Prostate gland (tissue), 2 donors: ENCODE measurements at regions of chr6 and their contacts with region 1.

Region 1: DNA sequence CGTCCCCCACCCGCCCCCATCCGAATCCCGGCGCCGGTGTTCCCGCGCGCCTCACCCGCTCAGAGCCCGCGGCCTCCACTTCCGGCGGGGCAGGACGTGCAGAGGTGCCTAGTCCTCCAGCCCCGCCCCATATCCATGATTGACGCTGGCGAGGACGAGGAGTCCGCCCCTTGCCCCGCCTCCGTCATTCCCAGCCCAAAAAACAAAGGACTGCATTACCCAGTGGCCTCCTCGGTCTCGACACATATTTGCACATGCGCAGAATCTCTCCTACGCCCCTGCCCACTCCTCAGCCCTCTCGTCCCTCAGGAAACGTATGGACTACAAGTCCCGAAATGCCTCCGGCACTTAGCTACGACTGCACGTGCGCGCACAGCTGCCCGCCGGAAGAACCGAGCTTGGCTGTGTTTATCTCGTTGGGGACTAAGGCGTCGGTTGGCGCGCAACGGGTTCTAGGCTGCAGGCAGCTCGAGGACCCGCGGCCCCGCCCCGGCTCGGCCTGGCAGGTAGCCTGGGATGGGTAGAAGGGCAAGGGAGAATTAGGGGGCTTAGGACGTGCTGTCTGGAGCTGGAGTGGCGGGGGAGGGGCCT is at the starts of genes KLHDC3 and MEA1:
- DNase-seq: peak; percentile 99
- H3K4me3 ChIP-seq: peak within 1 kb of the TSS; percentile 69 to 79
- H3K27ac ChIP-seq: peak within 1 kb of the TSS; percentile 82 to 84
- H3K4me1 ChIP-seq: peaks cover 8% of the 10 kb centered on the region
- H3K27me3 ChIP-seq: no peaks in the 10 kb centered on the region
- CTCF ChIP-seq: no peak
- POLR2A ChIP-seq: peak; percentile 58
- total RNA-seq, gene KLHDC3: 138 to 148 TPM
- total RNA-seq, gene MEA1: 67.9 to 95.9 TPM

Region 2: GRCh38 chr6:42901536-42901957 is 112.4 kb before region 1 on chr6:
- intact Hi-C with region 1: loop called (anchors 5 kb)
- DNase-seq: peak; percentile 84
- H3K4me3 ChIP-seq: no peak overlapping the region
- H3K27ac ChIP-seq: peak overlapping the region; percentile 75 to 88
- H3K4me1 ChIP-seq: peaks cover 6% of the 10 kb centered on the region
- H3K27me3 ChIP-seq: no peaks in the 10 kb centered on the region
- CTCF ChIP-seq: peak; percentile 73 to 98 (median 96)
- POLR2A ChIP-seq: no peak

Region 3: GRCh38 chr6:42970871-42971612 is 42.9 kb before region 1 on chr6:
- intact Hi-C with region 1: no loop called
- DNase-seq: no peak
- H3K4me3 ChIP-seq: no peak overlapping the region
- H3K27ac ChIP-seq: no peak overlapping the region
- H3K4me1 ChIP-seq: no peaks in the 10 kb centered on the region
- H3K27me3 ChIP-seq: no peaks in the 10 kb centered on the region
- CTCF ChIP-seq: no peak
- POLR2A ChIP-seq: no peak

Region 4: GRCh38 chr6:43059168-43060033 is 45.5 kb after region 1 on chr6 and contains the starts of genes KLC4 and MRPL2:
- intact Hi-C with region 1: loop called (anchors 10 kb)
- DNase-seq: peak; percentile 99
- H3K4me3 ChIP-seq: peak within 1 kb of the TSS; percentile 62 to 91
- H3K27ac ChIP-seq: peak within 1 kb of the TSS; percentile 92
- H3K4me1 ChIP-seq: peaks cover 16% of the 10 kb centered on the region
- H3K27me3 ChIP-seq: no peaks in the 10 kb centered on the region
- CTCF ChIP-seq: peak in 1 of 4 experiments; percentile 28
- POLR2A ChIP-seq: peak; percentile 75
- total RNA-seq, gene KLC4: 27.3 to 41.2 TPM
- total RNA-seq, gene MRPL2: 19.1 to 52.3 TPM

Region 5: DNA sequence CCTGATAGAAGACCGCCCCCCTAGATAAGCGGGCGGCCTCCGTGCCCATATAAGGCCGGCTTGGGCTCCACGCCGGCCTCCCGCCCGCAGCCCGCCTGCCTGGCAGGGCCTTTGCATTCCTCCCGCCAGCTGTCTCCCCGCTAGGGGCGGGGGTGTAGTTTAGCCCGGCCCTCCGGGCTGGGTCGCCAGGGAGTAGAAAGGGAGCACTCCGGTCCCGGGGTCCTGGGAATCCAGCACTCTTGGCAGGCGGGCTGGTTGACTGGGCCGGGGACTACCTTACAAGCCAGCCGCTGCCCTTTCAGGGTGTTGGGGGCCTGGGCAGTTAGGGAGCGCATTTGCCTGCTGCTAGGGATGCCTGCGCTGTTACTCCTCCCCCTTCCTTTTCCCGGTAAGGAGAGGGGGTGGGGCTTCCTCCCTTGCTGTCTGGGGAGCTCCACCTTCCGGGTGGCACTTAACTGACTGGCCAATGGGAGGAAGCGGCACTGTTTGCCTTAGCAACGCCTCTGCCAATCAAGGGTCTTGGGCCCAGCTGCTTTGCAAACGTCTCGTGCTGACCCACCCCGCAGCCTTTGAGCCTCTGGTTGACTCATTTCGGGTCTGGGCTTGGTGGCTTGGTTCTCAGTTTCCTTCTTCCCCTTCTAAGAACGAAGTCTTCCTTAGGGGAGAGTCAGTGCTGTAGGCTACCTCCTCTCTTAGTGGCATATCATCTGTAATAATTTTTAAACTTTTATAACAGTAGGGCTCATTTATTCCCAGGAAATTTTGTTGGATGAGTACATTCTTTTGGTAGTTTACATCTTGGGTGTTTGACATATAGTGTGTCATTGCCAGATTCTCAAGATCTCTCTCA is 160.6 kb after region 1 on chr6:
- intact Hi-C with region 1: loop called (anchors 5 kb)
- DNase-seq: peak; percentile 99
- H3K4me3 ChIP-seq: peak overlapping the region; percentile 36 to 98
- H3K27ac ChIP-seq: peak overlapping the region; percentile 99 to 100
- H3K4me1 ChIP-seq: peaks cover 11% of the 10 kb centered on the region
- H3K27me3 ChIP-seq: no peaks in the 10 kb centered on the region
- CTCF ChIP-seq: peak; percentile 31 to 79 (median 48)
- POLR2A ChIP-seq: peak; percentile 88